ENCODE measurements at regions of chr1 and their contacts with region 1.

Region 1: GRCh38 chr1:203368624-203369451 is 17.9 kb upstream of the FMOD start:
- DNase-seq: peak in 3 of 4 donors; percentile 55 to 88 (median 63)
- ATAC-seq: peak; percentile 89
- H3K4me3 ChIP-seq: no peak overlapping the region
- H3K27ac ChIP-seq: no peak overlapping the region
- H3K4me1 ChIP-seq: peaks cover 0 to 14% of the 10 kb centered on the region in 2 donors
- H3K27me3 ChIP-seq: peaks cover 0 to 7% of the 10 kb centered on the region in 2 donors
- CTCF ChIP-seq: peak in 1 of 2 donors; percentile 17

Region 2: GRCh38 chr1:203439131-203439730 is 70.4 kb after region 1 on chr1:
- intact Hi-C with region 1: loop called in 1 of 2 experiments (anchors 10 kb)
- DNase-seq: peak in 2 of 4 donors; percentile 44 to 67
- ATAC-seq: no peak
- H3K4me3 ChIP-seq: no peak overlapping the region
- H3K27ac ChIP-seq: no peak overlapping the region
- H3K4me1 ChIP-seq: no peaks in the 10 kb centered on the region
- H3K27me3 ChIP-seq: peaks cover 0 to 5% of the 10 kb centered on the region in 2 donors
- CTCF ChIP-seq: no peak

Measured in left lung (tissue), 14 donors.